CD8-positive, alpha-beta T cell (primary cell): ENCODE measurements at regions of chr6 and their contacts with region 1.

Region 1: GRCh38 chr6:30600451-30600961 is 16.5 kb downstream of the PPP1R10 start:
- DNase-seq: no peak
- ATAC-seq: no peak
- H3K4me3 ChIP-seq: no peak overlapping the region
- H3K4me3 Mint-ChIP-seq: no peak overlapping the region
- H3K27ac ChIP-seq: peak overlapping the region in 1 of 2 experiments; percentile 67
- H3K27ac Mint-ChIP-seq: no peak overlapping the region
- H3K4me1 ChIP-seq: peaks cover 15% of the 10 kb centered on the region
- H3K4me1 Mint-ChIP-seq: peaks cover 22% of the 10 kb centered on the region
- H3K27me3 ChIP-seq: no peaks in the 10 kb centered on the region
- H3K27me3 Mint-ChIP-seq: no peaks in the 10 kb centered on the region
- CTCF ChIP-seq: no peak

Region 2: DNA sequence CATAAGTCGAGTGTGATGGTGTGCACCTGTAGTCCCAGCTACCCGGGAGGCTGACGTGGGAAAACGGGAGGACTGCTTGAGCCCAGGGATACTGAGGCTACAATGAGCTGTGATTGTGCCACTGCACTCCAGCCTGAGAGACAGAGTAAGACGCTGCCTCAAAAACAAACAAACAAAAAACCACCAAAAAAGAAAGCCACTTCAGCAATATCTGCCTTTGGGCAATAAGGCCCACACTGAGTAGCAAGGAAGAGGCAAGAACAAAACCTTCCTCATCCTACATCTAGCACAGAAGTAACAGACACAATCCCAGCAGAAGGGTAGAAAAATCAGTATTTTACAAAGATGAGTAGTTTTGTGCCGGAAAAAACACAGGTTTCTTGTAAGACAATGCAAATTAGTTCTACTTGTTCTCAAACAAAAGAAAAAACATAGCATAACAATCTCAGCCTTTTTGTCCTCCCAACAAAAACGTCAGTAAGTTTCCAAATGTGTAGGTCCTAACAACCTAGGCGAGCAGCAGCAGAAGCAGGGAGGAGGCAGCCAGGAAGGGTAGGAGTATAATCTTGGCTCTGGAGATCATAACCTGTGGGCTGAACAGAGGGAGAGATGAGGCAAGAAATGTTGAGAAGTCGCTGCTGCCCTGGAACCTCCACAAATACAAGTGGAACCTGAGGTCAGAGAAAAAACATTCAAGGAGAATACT is 10.8 kb after region 1 on chr6:
- CTCF ChIA-PET with region 1: interaction called, 14 read pairs
- POLR2A ChIA-PET with region 1: interaction called, 100 read pairs
- intact Hi-C with region 1: no loop called
- DNase-seq: no peak
- ATAC-seq: no peak
- H3K4me3 ChIP-seq: no peak overlapping the region
- H3K4me3 Mint-ChIP-seq: no peak overlapping the region
- H3K27ac ChIP-seq: peak overlapping the region in 1 of 2 experiments; percentile 58
- H3K27ac Mint-ChIP-seq: peak overlapping the region; percentile 87
- H3K4me1 ChIP-seq: peaks cover 60% of the 10 kb centered on the region
- H3K4me1 Mint-ChIP-seq: peaks cover 66% of the 10 kb centered on the region
- H3K27me3 ChIP-seq: no peaks in the 10 kb centered on the region
- H3K27me3 Mint-ChIP-seq: no peaks in the 10 kb centered on the region
- CTCF ChIP-seq: no peak

Region 3: DNA sequence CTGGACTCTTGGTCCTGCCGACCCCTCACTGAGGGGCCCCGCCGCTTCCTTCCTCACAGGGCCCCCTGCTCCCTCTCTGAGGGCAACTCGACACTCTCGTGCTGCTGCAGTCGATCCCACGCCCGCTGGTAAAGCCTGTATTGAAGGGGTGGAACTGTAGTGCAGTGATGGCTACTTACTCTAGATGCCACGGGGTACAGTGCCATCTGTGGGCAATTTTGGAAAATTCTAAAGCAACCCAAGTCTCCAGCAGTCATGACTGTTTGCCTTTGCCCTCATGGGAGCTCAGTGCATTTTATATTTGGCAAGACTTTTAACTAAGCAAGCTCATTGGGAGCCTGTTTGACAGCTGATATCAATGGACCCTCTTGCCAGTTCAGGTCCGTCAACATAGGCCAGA is 40.0 kb after region 1 on chr6:
- CTCF ChIA-PET with region 1: interaction called, 13 read pairs
- POLR2A ChIA-PET with region 1: no interaction called
- intact Hi-C with region 1: no loop called
- DNase-seq: peak in 3 of 9 experiments; percentile 15 to 41 (median 25)
- ATAC-seq: peak; percentile 84
- H3K4me3 ChIP-seq: no peak overlapping the region
- H3K4me3 Mint-ChIP-seq: no peak overlapping the region
- H3K27ac ChIP-seq: peak overlapping the region in 1 of 2 experiments; percentile 3
- H3K27ac Mint-ChIP-seq: peak overlapping the region; percentile 69
- H3K4me1 ChIP-seq: peaks cover 22% of the 10 kb centered on the region
- H3K4me1 Mint-ChIP-seq: peaks cover 23% of the 10 kb centered on the region
- H3K27me3 ChIP-seq: no peaks in the 10 kb centered on the region
- H3K27me3 Mint-ChIP-seq: no peaks in the 10 kb centered on the region
- CTCF ChIP-seq: no peak

Region 4: DNA sequence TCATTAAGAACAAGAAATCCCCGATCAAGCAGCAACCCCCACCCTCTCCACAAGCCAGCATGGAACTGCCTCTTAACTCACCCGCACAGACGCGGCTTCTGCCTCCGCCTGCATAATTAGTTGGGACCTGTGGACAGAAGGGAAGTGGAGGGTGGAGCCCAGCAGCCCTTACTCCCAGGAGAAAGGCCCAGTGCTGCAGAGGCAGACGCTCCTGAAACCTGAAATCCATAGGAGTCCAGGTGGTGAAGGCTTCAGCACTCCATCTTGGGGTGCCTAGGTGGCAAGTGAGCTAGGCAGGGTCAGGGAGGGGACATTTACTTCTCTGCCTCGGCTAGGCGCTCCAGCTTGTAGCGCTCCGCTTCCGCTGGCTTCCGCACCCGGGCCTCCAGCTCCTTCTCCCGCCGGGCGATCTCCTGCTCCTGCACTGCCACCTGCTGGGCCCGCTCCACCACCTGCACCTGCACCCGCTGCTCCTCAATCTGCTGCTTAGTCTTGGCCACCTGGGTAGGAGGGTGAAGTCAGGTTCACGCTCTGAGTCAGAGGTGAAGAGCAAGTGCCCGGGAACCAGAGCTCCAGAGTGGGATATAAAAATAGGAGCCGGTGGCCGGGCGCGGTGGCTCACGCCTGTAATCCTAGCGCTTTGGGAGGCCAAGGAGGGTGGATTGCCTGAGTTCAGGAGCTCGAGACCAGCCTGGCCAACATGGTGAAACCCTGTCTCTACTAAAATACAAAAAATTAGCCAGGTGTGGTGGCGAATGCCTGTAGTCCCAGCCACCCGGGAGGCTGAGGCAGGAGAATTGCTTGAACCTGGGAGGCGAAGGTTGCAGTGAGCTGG is 130.3 kb after region 1 on chr6:
- CTCF ChIA-PET with region 1: interaction called, 17 read pairs
- POLR2A ChIA-PET with region 1: no interaction called
- intact Hi-C with region 1: loop called in 1 of 2 experiments (anchors 1 kb)
- DNase-seq: peak; percentile 67 to 91 (median 85)
- ATAC-seq: peak; percentile 98
- H3K4me3 ChIP-seq: peak overlapping the region in 1 of 2 experiments; percentile 21
- H3K4me3 Mint-ChIP-seq: peak overlapping the region; percentile 47
- H3K27ac ChIP-seq: no peak overlapping the region
- H3K27ac Mint-ChIP-seq: no peak overlapping the region
- H3K4me1 ChIP-seq: peaks cover 29% of the 10 kb centered on the region
- H3K4me1 Mint-ChIP-seq: peaks cover 37% of the 10 kb centered on the region
- H3K27me3 ChIP-seq: no peaks in the 10 kb centered on the region
- H3K27me3 Mint-ChIP-seq: no peaks in the 10 kb centered on the region
- CTCF ChIP-seq: peak; percentile 67

Region 5: DNA sequence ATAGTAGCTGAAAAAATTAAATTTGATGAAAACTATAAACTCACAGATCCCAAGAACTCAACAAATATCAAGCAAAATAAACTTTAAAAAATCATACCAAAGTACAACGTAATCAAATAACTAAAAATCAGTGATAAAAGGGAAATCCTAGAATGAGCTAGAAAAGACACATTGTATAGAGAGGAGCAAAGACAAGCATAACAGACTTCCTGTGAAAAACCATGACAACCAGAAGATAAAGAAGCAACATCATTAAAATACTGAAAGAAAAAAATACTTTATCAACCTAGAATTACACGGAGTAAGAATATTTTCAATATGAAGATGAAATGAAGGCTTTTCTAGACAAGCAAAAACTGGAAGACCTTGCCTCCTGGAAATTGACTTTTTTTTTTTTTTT is 419.6 kb after region 1 on chr6:
- CTCF ChIA-PET with region 1: no interaction called
- POLR2A ChIA-PET with region 1: no interaction called
- intact Hi-C with region 1: no loop called
- DNase-seq: no peak
- ATAC-seq: no peak
- H3K4me3 ChIP-seq: no peak overlapping the region
- H3K4me3 Mint-ChIP-seq: no peak overlapping the region
- H3K27ac ChIP-seq: no peak overlapping the region
- H3K27ac Mint-ChIP-seq: no peak overlapping the region
- H3K4me1 ChIP-seq: no peaks in the 10 kb centered on the region
- H3K4me1 Mint-ChIP-seq: no peaks in the 10 kb centered on the region
- H3K27me3 ChIP-seq: peaks cover 0 to 3% of the 10 kb centered on the region in 2 experiments
- H3K27me3 Mint-ChIP-seq: peaks cover 10% of the 10 kb centered on the region
- CTCF ChIP-seq: no peak